ENCODE measurements at regions of chr17 and their contacts with region 1.

Region 1: DNA sequence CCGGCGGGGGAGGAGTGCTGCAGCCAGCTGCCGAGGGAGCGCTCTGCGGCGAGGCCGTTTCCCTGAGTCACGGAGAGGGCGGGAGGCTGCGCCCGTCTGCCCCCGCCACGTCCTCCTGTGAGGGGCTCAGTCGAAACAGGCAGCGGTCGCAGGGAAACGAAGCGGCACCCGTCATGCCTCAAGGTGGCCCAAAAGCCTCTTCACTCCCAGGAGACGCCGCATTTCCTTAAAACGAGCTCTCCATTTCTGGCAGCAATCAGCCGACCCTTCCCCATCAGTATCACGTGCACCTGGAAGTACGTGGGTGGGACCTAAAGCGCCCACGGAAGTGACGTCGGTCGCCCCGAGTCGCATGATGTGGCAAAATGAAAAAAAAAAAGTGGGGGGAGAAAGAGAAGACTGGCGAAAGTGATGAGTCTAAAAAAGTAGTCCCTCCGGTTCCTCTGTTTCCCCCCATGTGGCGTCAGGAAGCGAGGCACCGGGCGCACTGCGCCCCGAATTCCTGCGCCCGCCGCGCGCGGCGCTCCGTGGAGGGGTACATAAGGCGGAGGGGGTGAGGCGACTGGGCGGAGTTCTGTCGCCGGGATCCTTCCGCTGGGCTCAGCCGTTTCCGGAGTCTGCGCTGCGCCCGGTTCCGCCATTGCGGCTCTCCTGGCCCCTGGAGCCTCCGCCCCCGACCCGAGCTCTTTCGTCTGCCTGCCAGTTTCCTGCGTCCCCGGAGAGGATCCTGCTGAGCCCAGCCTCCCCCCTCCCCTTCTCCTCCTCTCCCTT is at the start of gene CLTC:
- H3K4me3 Mint-ChIP-seq: peak within 1 kb of the TSS; percentile 90
- H3K27ac Mint-ChIP-seq: peak within 1 kb of the TSS; percentile 99
- H3K4me1 Mint-ChIP-seq: peaks cover 19% of the 10 kb centered on the region
- H3K27me3 Mint-ChIP-seq: no peaks in the 10 kb centered on the region

Region 2: DNA sequence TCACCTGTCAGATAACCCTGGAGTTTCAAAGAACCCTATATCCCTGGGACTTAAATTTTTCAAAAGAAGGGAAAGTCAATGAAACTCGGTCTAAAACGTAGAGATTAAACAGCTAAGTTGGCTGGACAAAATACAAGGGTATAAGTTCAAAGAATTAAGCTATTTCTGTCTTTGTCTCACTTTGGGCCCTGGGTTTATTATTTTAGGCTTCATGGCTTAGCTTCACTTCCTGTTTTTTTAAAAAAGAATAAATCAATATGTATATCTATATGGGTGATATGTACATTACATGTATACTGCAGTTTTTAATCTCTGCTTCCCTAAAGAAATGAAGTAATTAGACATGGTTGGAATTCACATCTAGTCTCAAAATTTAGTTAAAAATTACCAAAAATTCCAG is 645.1 kb before region 1 on chr17:
- intact Hi-C with region 1: no loop called
- H3K4me3 Mint-ChIP-seq: no peak overlapping the region
- H3K27ac Mint-ChIP-seq: no peak overlapping the region
- H3K4me1 Mint-ChIP-seq: peaks cover 17% of the 10 kb centered on the region
- H3K27me3 Mint-ChIP-seq: no peaks in the 10 kb centered on the region

Region 3: DNA sequence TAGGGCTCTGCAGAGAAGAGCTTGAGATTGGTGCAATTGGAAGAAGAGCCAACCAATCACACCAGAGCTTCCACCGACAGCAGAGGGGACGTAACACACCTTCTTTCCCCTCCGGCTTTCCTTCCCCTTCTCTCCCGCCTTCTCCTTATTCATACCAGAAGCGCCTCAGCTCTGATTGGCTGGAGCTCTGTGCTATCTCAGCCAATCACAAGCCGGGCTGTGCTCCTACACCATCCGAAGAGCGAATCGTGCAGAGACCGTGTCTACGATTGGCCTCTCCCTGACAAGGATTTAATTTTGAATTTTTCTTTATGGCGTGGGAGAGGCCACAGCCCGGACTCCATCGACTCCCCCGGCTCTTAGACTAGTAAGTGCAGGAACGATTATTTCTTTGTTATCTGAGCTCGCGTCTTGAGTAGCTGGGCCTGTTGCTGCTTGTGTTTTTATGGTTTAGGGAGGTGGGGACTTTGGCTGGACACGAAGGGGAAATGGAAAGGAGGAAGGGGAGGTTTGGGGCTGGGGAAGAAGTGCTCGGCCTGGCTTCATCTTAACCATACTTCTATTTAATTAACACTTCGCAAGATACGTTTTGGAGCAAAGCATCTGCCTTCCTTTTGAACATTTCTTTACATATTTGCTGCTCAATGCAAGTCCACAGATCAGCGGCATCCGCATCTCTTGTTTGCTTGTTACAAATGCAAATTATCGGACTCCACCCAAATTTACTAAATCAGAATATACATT is 463.9 kb before region 1 on chr17 and contains the start of gene PRR11:
- intact Hi-C with region 1: loop called (anchors 5 kb)
- H3K4me3 Mint-ChIP-seq: no peak within 1 kb of the TSS
- H3K27ac Mint-ChIP-seq: no peak within 1 kb of the TSS
- H3K4me1 Mint-ChIP-seq: peaks cover 44% of the 10 kb centered on the region
- H3K27me3 Mint-ChIP-seq: no peaks in the 10 kb centered on the region

Region 4: DNA sequence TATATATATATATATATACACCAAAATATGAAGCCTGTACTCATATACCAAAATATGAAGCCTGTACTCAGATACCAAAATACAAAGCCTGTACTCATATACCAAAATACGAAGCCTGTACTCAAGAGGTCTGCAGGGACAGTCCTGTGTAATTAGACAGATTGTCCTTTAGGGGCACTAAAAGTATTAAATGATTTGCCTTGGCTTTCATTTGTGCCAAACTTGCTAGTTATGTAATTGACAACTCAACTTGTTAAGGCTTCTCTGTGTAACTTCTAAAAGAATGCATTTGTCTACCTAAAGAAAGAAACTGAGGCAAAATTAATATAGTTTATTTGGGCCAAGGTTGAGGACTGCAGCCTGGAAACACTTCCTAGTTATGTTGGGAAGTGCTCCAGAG is 84.9 kb before region 1 on chr17:
- intact Hi-C with region 1: no loop called
- H3K4me3 Mint-ChIP-seq: no peak overlapping the region
- H3K27ac Mint-ChIP-seq: no peak overlapping the region
- H3K4me1 Mint-ChIP-seq: peaks cover 22% of the 10 kb centered on the region
- H3K27me3 Mint-ChIP-seq: no peaks in the 10 kb centered on the region

Region 5: DNA sequence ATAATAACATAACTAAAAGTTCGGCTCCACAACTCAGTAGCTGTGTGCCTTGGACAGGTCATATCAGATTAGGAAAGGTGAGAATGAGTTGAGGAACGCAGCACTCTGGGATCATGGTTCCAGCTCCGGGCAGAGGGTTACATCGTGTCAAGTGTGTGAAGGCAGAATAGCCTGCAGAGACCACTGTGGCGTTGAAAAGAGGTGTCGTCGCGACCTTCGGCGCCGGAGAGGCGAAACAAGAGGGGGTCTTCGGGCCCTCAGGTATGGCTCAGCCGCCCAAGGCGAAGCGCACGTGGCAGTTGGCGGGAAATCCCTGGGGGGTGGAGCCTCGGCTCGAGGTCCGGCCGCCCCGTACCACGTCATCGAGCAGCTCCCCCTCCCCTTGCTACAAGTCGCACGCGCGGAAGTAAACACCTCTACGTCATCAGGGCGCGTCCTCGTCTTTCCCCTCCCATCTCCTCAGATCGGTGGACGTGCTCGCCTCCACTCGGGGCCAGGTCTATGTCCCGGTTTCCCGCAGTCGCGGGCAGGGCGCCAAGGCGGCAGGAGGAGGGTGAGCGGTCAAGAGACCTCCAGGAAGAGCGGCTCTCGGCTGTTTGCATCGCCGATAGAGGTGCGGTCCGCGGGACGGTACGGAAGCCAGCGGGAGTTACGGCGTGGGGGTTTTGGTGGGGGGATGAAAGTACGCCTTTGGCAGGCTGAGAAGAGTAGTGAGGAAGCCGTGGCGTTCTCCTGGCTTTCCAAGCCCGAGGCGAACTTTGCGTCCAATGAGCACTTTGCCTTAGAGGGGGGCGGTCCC is 54.1 kb before region 1 on chr17 and contains the start of gene DHX40:
- intact Hi-C with region 1: loop called (anchors 5 kb)
- H3K4me3 Mint-ChIP-seq: peak within 1 kb of the TSS; percentile 100
- H3K27ac Mint-ChIP-seq: peak within 1 kb of the TSS; percentile 96
- H3K4me1 Mint-ChIP-seq: peaks cover 19% of the 10 kb centered on the region
- H3K27me3 Mint-ChIP-seq: no peaks in the 10 kb centered on the region

Region 6: DNA sequence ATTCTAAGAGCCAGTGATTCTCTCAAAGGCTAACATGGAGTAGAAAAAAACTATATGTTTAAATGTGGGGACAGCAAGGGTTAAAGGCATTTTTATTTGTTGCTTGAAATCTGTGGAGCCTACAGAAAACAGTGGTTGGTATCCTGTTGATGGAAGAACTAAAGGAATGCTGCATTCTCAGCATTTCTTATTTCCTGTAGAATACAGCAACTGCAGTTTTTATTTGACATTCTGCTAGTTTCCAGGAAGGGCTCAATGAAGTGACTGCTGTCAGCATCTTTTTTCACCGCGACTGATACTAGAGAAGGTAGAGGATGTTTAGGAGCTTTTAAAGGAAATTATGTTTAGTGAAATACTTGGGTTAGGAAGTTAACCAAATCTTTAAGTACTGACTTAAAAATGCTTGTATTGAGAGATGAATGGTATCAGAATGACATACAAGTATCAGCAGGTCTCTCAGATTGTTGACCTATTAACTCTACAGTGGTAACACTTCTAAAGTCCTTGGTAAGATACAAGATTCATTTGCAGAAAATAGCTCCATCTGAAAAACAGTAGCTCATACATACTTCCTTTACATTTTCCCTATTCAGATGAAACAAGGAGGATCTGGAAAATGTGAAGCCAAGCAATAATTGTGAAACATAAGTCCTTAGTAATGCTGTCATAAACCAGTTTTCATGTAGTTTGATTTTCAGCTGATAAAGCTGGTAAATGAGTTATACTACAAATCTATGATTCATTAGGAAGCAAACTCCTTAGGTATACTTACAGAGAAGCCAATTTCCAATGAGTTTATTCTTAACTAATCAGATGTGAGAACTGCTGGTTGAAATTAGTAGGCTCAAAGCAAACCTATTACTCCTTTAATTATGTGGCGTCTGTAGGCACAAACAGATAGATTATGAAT is 15.4 kb after region 1 on chr17:
- intact Hi-C with region 1: loop called (anchors 1 kb)
- H3K4me3 Mint-ChIP-seq: peak overlapping the region; percentile 30
- H3K27ac Mint-ChIP-seq: peak overlapping the region; percentile 79
- H3K4me1 Mint-ChIP-seq: peaks cover 46% of the 10 kb centered on the region
- H3K27me3 Mint-ChIP-seq: no peaks in the 10 kb centered on the region

Region 7: GRCh38 chr17:59707114-59707970 is 87.9 kb after region 1 on chr17 and contains the starts of genes PTRH2 and VMP1:
- intact Hi-C with region 1: loop called (anchors 1 kb)
- H3K4me3 Mint-ChIP-seq: peak within 1 kb of the TSS; percentile 91
- H3K27ac Mint-ChIP-seq: peak within 1 kb of the TSS; percentile 93
- H3K4me1 Mint-ChIP-seq: peaks cover 61% of the 10 kb centered on the region
- H3K27me3 Mint-ChIP-seq: no peaks in the 10 kb centered on the region

Region 8: GRCh38 chr17:59876107-59876506 is 256.6 kb after region 1 on chr17:
- intact Hi-C with region 1: no loop called
- H3K4me3 Mint-ChIP-seq: no peak overlapping the region
- H3K27ac Mint-ChIP-seq: no peak overlapping the region
- H3K4me1 Mint-ChIP-seq: peaks cover 12% of the 10 kb centered on the region
- H3K27me3 Mint-ChIP-seq: no peaks in the 10 kb centered on the region

Measured in dendritic cell treated with granulocyte-macrophage colony-stimulating factor and Interleukin-4, amounts not matched to agents 40 ng/mL and 50 ng/mL, for 4 days (primary cell).